Activated CD4-positive, alpha-beta T cell treated with anti-CD3 and anti-CD28 coated beads, Interleukin-2, amount 10 ng/mL, durations not matched to agents 24 days and 14 days (primary cell): ENCODE measurements at regions of chr19 and their contacts with region 1.

Region 1: DNA sequence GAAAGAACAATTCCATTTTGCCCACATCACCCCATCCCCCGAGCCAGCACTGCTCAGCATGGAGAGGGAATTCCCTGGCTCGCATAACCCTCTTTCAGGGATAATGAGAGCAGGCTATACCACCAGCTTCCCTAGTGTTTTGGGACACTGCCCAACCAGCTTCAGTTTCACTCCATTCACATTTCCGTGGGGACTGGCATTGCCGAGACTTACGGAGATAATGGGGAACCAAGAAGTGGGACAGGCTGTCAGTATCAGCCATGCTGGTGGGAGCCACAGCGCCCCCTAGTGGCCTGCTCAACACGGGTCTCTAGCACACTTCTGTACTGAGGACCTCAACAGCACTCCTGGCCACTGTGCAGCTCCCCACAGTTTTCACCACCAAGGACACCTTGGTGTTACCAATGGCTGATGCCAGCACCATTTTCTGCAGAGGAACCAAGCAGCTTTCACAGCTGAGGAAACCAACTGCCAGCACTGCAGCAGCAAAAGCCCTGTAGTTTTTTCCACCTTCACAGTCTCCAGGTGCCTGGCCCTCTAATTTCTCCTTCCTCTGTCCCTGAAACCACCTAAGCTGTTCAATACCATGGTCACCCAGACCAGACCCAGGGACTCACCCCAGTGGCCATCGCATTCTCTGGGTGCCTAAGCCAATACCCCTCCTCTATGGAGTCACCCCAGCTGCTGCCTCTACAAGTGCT is 23.7 kb downstream of the SLC6A16 start:
- DNase-seq: peak; percentile 93
- H3K4me3 Mint-ChIP-seq: no peak overlapping the region
- H3K27ac Mint-ChIP-seq: no peak overlapping the region
- H3K4me1 Mint-ChIP-seq: peaks cover 6% of the 10 kb centered on the region
- H3K27me3 Mint-ChIP-seq: peaks cover 12% of the 10 kb centered on the region

Region 2: GRCh38 chr19:49224856-49225255 is 76.5 kb before region 1 on chr19:
- intact Hi-C with region 1: loop called (anchors 2 kb)
- DNase-seq: peak; percentile 79
- H3K4me3 Mint-ChIP-seq: no peak overlapping the region
- H3K27ac Mint-ChIP-seq: no peak overlapping the region
- H3K4me1 Mint-ChIP-seq: peaks cover 6% of the 10 kb centered on the region
- H3K27me3 Mint-ChIP-seq: peaks cover 8% of the 10 kb centered on the region